ENCODE measurements at regions of chr4 and their contacts with region 1.

Region 1: DNA sequence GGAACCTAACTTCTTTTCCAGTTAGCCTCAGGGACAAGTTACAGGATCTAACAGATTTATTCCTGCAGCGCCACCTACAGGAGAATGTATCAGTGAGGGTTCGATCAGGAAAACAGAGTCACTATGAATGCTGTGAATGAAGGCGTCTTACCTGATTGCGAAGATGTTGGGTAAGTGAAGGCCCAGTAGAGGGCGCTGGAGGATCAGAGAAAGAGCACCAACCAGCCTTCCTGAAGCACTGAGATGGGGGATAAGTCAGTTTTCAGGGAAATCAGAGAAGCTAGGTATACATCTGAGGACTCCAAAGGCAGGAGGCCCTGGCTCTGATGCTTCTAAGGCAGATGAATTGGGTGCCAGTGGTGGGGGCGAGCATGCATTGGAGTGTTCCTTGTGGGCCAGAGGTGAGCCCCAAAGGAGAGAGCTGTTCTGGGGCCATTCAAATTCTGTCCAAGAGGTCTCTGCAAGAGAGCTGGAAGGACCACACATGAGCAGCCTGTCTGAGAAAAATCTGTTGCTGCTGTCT is 169.9 kb upstream of the AADAT start:
- DNase-seq: peak; percentile 88
- H3K4me3 ChIP-seq: no peak overlapping the region
- H3K27ac ChIP-seq: no peak overlapping the region
- H3K4me1 ChIP-seq: no peaks in the 10 kb centered on the region
- H3K27me3 ChIP-seq: no peaks in the 10 kb centered on the region
- CTCF ChIP-seq: peak; percentile 97 to 98

Region 2: GRCh38 chr4:170138580-170139194 is 121.0 kb before region 1 on chr4:
- CTCF ChIA-PET with region 1: no interaction called
- dilution Hi-C with region 1: no loop called
- in situ Hi-C with region 1: loop called (anchors 10 to 25 kb)
- intact Hi-C with region 1: loop called (anchors 1 kb)
- DNase-seq: peak; percentile 63
- H3K4me3 ChIP-seq: no peak overlapping the region
- H3K27ac ChIP-seq: no peak overlapping the region
- H3K4me1 ChIP-seq: peaks cover 9% of the 10 kb centered on the region
- H3K27me3 ChIP-seq: no peaks in the 10 kb centered on the region
- CTCF ChIP-seq: peak; percentile 82 to 91

Region 3: GRCh38 chr4:170374770-170375169 is 115.1 kb after region 1 on chr4:
- CTCF ChIA-PET with region 1: no interaction called
- dilution Hi-C with region 1: no loop called
- in situ Hi-C with region 1: no loop called
- intact Hi-C with region 1: loop called (anchors 1 kb)
- DNase-seq: peak; percentile 45
- H3K4me3 ChIP-seq: no peak overlapping the region
- H3K27ac ChIP-seq: no peak overlapping the region
- H3K4me1 ChIP-seq: no peaks in the 10 kb centered on the region
- H3K27me3 ChIP-seq: no peaks in the 10 kb centered on the region
- CTCF ChIP-seq: peak; percentile 67 to 88

Region 4: DNA sequence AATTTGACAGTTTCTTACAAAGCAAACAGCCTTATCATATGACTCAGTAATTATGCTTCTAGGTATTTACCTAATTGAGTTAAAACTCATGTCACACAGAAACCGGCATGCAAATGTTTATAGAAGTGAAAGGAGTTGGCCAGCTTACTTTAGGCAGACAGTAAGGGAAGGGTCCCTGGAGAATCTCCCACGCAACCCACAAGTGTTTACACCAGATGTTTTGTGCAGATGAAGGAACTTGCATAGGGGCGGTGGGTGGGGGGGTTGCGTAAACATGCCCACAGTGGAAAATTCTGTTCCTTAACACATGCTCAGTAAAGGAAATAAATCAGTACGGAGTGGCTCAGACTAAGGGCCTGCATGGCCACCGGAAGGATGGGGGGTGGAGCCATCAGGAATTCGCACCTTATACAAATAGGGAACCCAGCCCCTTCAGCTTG is 160.6 kb after region 1 on chr4:
- CTCF ChIA-PET with region 1: no interaction called
- dilution Hi-C with region 1: no loop called
- in situ Hi-C with region 1: no loop called
- intact Hi-C with region 1: no loop called
- DNase-seq: no peak
- H3K4me3 ChIP-seq: no peak overlapping the region
- H3K27ac ChIP-seq: no peak overlapping the region
- H3K4me1 ChIP-seq: no peaks in the 10 kb centered on the region
- H3K27me3 ChIP-seq: no peaks in the 10 kb centered on the region
- CTCF ChIP-seq: no peak

Region 5: DNA sequence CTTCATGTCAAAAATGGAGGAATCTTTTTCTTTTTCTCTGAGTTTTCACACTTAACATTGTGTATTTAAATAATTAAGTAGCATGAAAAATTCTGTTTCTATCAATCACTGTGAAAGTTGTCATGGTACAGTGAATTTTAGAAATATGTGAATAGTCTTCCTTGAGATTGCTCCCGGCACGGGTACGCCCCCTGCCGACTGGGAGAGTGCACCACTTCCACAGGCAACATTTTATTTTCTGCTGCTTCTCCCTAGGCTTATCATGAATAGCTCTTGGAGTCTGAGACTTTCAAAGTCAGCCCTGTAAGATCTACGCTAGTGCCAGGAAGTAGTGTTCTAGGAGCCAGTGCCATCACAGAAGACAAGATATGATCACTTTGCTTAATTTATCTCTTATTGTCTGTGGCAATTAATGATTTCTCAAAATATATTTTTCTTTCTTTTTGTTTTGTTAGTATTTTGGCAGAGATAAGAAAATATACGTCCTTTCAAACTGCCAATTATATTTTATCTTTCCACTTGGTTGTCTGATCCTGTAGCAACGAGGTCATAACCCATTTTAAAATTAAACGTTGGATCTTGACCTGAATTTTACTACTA is 593.8 kb after region 1 on chr4:
- CTCF ChIA-PET with region 1: interaction called, 3 read pairs
- dilution Hi-C with region 1: no loop called
- in situ Hi-C with region 1: no loop called
- intact Hi-C with region 1: loop called (anchors 5 kb)
- DNase-seq: peak; percentile 44
- H3K4me3 ChIP-seq: no peak overlapping the region
- H3K27ac ChIP-seq: no peak overlapping the region
- H3K4me1 ChIP-seq: peaks cover 5% of the 10 kb centered on the region
- H3K27me3 ChIP-seq: no peaks in the 10 kb centered on the region
- CTCF ChIP-seq: peak; percentile 93 to 97

Region 6: DNA sequence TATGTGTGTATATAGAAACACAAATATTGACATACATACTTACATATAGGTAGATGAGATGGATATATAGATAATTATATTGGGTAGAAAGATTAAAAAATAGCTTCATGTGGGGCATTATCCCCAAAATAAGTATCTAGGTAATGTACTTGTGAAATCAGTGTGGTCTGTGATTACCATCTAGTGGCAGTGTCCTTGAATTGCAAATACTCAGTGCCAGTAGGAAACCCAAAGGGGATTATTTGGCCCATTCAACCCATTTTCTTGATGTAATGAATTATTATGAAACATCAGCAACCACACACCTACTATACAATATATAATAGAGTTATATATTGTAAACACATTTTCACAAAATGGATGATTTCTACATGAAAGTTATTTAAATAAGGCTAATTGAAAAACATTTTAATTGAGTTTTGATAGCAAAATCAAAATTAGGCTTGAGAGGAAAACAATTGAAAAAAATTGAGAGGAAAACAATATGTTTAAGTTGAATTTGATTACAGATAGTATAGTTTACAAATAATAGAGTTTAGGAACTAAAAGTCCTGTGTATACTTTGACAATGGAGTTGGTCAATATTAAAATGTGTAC is 1942.9 kb after region 1 on chr4:
- CTCF ChIA-PET with region 1: no interaction called
- dilution Hi-C with region 1: no loop called
- in situ Hi-C with region 1: no loop called
- intact Hi-C with region 1: loop called (anchors 5 kb)
- DNase-seq: no peak
- H3K4me3 ChIP-seq: no peak overlapping the region
- H3K27ac ChIP-seq: no peak overlapping the region
- H3K4me1 ChIP-seq: no peaks in the 10 kb centered on the region
- H3K27me3 ChIP-seq: no peaks in the 10 kb centered on the region
- CTCF ChIP-seq: peak; percentile 62 to 75

Measured in mammary epithelial cell (primary cell).